Activated CD4-positive, alpha-beta memory T cell treated with anti-CD3 and anti-CD28 coated beads for 36 hours (primary cell): ENCODE measurements at regions of chr1 and their contacts with region 1.

Region 1: GRCh38 chr1:117534995-117535467 is 70.8 kb upstream of the TENT5C start:
- DNase-seq: peak; percentile 41
- H3K4me3 Mint-ChIP-seq: no peak overlapping the region
- H3K27ac Mint-ChIP-seq: no peak overlapping the region
- H3K4me1 Mint-ChIP-seq: peaks cover 21% of the 10 kb centered on the region
- H3K27me3 Mint-ChIP-seq: peaks cover 5% of the 10 kb centered on the region

Region 2: DNA sequence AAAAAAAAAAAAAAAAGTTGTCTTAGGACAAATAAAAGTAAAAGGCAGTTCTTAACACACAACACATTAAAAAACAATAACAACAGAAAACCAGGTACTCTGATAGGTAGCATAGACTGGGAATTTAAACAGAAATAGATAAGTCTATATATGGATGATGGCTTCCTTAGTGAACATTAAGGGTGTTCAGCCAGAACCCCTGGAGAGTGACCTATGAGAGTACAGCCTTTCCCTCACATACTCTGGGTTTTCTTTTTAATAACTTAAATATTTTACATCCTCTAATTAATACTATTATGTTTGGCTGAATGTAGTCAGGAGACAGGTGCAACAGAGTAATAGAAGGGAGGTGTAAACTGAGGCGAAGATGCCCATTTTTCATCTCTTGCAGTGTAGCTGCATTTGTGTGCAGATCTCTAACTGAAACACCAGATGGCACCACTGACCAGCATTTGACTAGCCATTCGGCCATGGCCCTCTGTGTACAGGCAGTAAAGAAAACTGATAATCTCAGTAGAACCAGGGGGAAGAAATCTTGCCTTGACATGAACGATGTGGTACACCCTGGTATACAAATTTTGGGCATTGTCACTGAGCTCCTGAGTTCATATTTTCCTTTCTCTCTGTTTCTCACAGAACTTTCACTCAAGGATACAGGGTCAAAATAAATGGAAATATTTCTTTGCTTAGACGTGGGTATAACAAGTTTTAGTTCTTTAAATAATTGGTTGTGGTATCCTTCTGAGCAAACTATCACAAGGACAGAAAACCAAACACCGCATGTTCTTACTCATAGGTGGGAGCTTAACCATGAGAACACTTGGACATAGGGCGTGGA is 467.3 kb before region 1 on chr1:
- CTCF ChIA-PET with region 1: interaction called, 10 read pairs
- POLR2A ChIA-PET with region 1: no interaction called
- intact Hi-C with region 1: loop called (anchors 5 kb)
- DNase-seq: peak; percentile 60
- H3K4me3 Mint-ChIP-seq: no peak overlapping the region
- H3K27ac Mint-ChIP-seq: no peak overlapping the region
- H3K4me1 Mint-ChIP-seq: peaks cover 38% of the 10 kb centered on the region
- H3K27me3 Mint-ChIP-seq: no peaks in the 10 kb centered on the region

Region 3: GRCh38 chr1:117512743-117513321 is 22.2 kb before region 1 on chr1:
- CTCF ChIA-PET with region 1: interaction called, 22 read pairs
- POLR2A ChIA-PET with region 1: no interaction called
- intact Hi-C with region 1: loop called (anchors 2 kb)
- DNase-seq: no peak
- H3K4me3 Mint-ChIP-seq: no peak overlapping the region
- H3K27ac Mint-ChIP-seq: no peak overlapping the region
- H3K4me1 Mint-ChIP-seq: no peaks in the 10 kb centered on the region
- H3K27me3 Mint-ChIP-seq: no peaks in the 10 kb centered on the region

Region 4: GRCh38 chr1:117622726-117623125 is 87.7 kb after region 1 on chr1:
- CTCF ChIA-PET with region 1: interaction called, 11 read pairs
- POLR2A ChIA-PET with region 1: interaction called, 3 read pairs
- intact Hi-C with region 1: loop called (anchors 2 kb)
- DNase-seq: no peak
- H3K4me3 Mint-ChIP-seq: no peak overlapping the region
- H3K27ac Mint-ChIP-seq: peak overlapping the region; percentile 26
- H3K4me1 Mint-ChIP-seq: peaks cover 38% of the 10 kb centered on the region
- H3K27me3 Mint-ChIP-seq: no peaks in the 10 kb centered on the region

Region 5: DNA sequence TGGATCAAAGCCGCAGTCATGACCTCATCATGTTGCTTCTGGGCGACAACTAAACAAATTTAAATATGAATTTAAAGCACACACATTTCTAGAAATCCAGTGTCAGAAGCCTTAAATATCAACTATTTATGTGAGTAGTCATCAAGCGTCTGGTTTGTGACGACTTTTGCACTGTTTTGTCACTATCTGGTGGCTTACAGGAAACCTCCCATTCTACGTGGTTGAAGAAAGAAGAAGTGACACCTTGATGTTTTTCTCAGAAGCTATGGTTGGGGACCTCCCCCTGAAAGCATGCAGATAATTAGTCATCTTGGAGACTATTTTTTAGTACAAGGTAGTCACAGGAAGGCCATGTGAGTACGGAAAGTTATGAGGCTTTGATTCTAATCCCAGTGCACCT is 129.3 kb after region 1 on chr1:
- CTCF ChIA-PET with region 1: interaction called, 67 read pairs
- POLR2A ChIA-PET with region 1: interaction called, 4 read pairs
- intact Hi-C with region 1: loop called (anchors 1 kb)
- DNase-seq: peak; percentile 76
- H3K4me3 Mint-ChIP-seq: no peak overlapping the region
- H3K27ac Mint-ChIP-seq: peak overlapping the region; percentile 68
- H3K4me1 Mint-ChIP-seq: peaks cover 78% of the 10 kb centered on the region
- H3K27me3 Mint-ChIP-seq: no peaks in the 10 kb centered on the region

Region 6: GRCh38 chr1:117735045-117735992 is 200.3 kb after region 1 on chr1:
- CTCF ChIA-PET with region 1: interaction called, 11 read pairs
- POLR2A ChIA-PET with region 1: no interaction called
- intact Hi-C with region 1: no loop called
- DNase-seq: peak; percentile 55
- H3K4me3 Mint-ChIP-seq: peak overlapping the region; percentile 66
- H3K27ac Mint-ChIP-seq: peak overlapping the region; percentile 73
- H3K4me1 Mint-ChIP-seq: peaks cover 10% of the 10 kb centered on the region
- H3K27me3 Mint-ChIP-seq: no peaks in the 10 kb centered on the region

Region 7: DNA sequence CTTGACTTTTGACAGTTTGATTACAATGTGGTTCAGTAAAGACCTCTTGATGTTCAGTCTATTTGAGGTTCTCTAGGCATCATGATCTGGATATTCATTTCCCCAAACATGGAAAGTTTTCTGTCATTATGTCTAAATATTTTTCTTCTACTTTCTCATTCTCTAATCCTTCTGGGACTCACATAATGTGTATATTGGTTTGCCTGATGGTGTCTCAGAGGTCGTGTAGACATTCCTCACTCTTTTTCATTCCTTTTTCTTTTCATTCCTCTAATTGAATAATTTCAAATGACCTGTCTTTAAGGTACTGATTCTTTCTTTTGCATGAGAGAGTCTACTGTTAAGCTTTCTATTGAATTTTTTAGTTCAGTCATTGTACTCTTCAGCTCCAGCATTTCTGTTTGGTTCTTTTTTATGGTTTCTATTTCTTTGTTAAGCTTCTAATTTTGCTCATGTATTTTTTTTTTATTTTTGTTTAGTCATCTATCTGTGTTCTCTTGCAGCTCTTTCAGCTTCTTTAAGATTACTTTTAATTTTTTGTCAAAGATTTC is 236.0 kb after region 1 on chr1:
- CTCF ChIA-PET with region 1: no interaction called
- POLR2A ChIA-PET with region 1: no interaction called
- intact Hi-C with region 1: no loop called
- DNase-seq: no peak
- H3K4me3 Mint-ChIP-seq: no peak overlapping the region
- H3K27ac Mint-ChIP-seq: no peak overlapping the region
- H3K4me1 Mint-ChIP-seq: no peaks in the 10 kb centered on the region
- H3K27me3 Mint-ChIP-seq: peaks cover 16% of the 10 kb centered on the region